ENCODE measurements at regions of chr10 and their contacts with region 1.

Region 1: DNA sequence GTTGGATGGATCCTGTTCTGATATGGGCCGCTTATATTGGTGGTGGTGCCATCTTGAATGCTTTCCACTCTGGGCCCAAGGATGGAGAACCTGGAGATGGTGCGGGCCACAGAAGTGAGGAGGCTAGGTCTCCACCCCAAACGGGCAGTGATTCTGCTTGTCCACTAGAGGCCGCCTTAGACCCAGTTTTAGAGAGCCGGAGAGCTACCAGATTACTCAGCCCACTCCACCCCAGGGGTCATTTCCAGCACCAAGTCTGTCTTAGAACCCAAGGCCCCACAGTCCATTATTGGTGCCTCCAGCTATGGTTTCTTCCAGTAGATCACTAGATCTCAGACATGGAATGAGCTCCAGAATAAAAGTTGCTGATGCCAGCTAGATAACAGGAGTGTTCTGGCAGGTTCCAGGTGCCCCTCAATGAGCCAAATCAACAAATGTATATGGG is 11.8 kb upstream of the CAMK2G start:
- DNase-seq: peak; percentile 74 to 81 (median 79)
- ATAC-seq: peak; percentile 88
- H3K4me3 ChIP-seq: no peak overlapping the region
- H3K27ac ChIP-seq: peak overlapping the region; percentile 88
- H3K4me1 ChIP-seq: peaks cover 20% of the 10 kb centered on the region
- H3K27me3 ChIP-seq: no peaks in the 10 kb centered on the region

Region 2: DNA sequence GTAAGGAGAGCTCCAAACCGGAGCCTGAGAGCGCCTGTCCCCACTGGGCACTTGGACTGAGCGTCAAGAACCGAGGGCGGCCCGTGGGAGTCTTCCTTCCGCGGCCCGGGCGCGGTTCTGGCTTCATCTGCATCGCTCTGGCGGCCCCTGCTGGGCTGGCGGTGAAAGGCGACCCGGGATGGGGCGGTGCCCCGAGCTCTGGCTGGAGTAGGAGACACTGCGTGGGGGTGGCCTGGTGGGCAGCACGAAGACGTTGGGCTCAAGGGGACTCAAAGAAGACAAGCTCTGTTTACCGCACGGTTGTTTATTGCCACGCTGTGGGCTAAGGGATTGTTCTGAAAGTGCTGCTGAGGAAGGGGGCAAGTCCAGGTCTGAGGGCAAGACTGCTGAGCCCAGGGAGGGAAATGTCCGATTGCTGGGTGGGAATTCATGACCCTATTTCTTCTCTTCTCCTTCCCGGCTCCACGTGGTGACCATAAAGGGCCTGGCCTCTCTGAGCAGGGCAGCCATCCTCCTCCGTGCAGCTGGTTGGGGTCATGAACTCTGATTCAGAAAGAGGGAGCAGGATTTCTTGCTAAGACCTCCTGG is 54.6 kb after region 1 on chr10:
- intact Hi-C with region 1: loop called (anchors 2 to 5 kb)
- DNase-seq: peak; percentile 90 to 97 (median 96)
- ATAC-seq: peak; percentile 94 to 96
- H3K4me3 ChIP-seq: no peak overlapping the region
- H3K27ac ChIP-seq: no peak overlapping the region
- H3K4me1 ChIP-seq: peaks cover 3% of the 10 kb centered on the region
- H3K27me3 ChIP-seq: no peaks in the 10 kb centered on the region

Measured in right cardiac atrium (tissue), 5 donors.